ENCODE measurements at regions of chr5 and their contacts with region 1.

Region 1: DNA sequence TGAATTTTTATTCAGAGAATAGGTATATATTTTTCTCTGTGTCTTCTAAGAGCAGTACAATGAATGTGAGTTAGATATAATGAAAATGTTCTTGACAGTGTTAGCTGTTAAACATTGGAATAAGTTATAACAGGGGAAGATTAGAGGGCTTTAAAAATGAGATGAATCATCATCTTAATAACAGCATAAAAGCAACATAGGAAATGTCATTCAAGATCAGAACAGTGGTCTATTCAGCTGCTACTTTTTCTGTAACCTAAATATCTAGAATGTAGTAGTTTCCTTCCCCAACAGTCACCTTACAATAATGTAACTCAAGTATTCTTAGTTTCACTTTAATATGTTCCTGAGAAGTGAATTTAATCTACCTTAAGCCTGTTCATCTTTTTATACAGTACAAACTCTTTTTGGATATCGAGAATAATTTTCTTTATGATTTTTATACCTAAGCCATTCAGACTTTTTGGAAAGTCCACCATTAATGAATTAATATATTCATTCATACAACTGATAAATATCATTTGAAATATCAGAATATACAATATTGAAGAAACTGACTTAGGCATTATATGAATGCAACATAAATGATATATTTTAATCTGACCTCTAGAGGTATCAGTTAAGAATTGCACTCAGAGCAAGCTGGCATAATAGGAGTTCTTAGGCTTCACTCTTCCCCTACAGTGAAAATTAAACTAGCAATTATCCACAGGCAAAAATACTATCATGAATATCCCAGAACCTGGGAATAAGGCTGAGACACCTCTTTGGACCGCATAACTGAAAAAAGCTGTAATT is 66.1 kb upstream of the EDIL3 start:
- DNase-seq: peak; percentile 43
- H3K4me3 ChIP-seq: no peak overlapping the region
- H3K27ac ChIP-seq: no peak overlapping the region
- H3K4me1 ChIP-seq: peaks cover 8% of the 10 kb centered on the region
- H3K27me3 ChIP-seq: no peaks in the 10 kb centered on the region
- CTCF ChIP-seq: no peak
- POLR2A ChIP-seq: no peak

Region 2: GRCh38 chr5:84437673-84438315 is 13.0 kb before region 1 on chr5:
- CTCF ChIA-PET with region 1: interaction called, 7 read pairs
- POLR2A ChIA-PET with region 1: no interaction called
- dilution Hi-C with region 1: no loop called
- intact Hi-C with region 1: loop called (anchors 1 kb)
- DNase-seq: peak; percentile 61
- H3K4me3 ChIP-seq: no peak overlapping the region
- H3K27ac ChIP-seq: no peak overlapping the region
- H3K4me1 ChIP-seq: peaks cover 6% of the 10 kb centered on the region
- H3K27me3 ChIP-seq: no peaks in the 10 kb centered on the region
- CTCF ChIP-seq: no peak
- POLR2A ChIP-seq: no peak